ENCODE measurements at regions of chr11 and their contacts with region 1.

Region 1: DNA sequence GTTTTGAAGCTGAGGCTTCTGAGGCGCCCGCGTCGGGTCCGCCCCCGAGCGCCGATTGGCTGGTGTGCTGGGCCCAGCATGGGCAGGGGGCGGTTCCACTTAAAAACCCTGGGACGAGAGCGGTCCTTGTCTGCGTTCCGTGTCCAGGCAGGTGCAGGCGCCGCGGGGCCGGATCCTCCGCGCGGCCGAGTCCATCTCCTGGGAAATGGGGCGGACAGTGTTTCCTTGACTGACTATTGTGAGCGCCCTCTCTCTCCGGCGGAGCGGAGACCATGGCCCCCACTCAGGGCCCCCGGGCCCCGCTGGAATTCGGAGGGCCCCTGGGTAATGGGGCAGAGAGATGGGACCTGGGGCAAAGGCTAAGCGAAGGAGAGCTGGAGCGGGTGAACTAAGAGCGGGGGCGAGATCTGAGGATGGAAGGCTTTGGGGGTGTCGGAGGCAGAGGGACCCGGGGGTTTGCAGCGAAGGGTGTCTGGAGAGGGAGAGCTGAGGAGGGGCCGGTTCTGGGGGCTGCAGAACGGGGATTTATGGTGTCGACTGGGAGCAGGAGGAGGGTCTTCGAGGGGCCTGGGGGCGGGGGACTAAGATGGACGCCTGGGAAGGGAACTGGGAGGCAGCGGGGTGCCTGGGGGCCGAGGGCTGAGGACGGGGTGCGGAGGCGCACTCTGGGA is at the start of gene TM7SF2:
- DNase-seq: peak; percentile 83 to 96 (median 95)
- ATAC-seq: peak; percentile 70
- H3K4me3 ChIP-seq: peak within 1 kb of the TSS; percentile 73 to 84
- H3K4me3 Mint-ChIP-seq: peak within 1 kb of the TSS; percentile 86
- H3K27ac ChIP-seq: peak within 1 kb of the TSS; percentile 67 to 74
- H3K27ac Mint-ChIP-seq: peak within 1 kb of the TSS; percentile 87
- H3K4me1 ChIP-seq: peaks cover 48% of the 10 kb centered on the region
- H3K4me1 Mint-ChIP-seq: peaks cover 38% of the 10 kb centered on the region
- H3K27me3 ChIP-seq: no peaks in the 10 kb centered on the region
- H3K27me3 Mint-ChIP-seq: no peaks in the 10 kb centered on the region
- CTCF ChIP-seq: no peak
- total RNA-seq, gene TM7SF2: 20.7 to 23.8 TPM

Region 2: DNA sequence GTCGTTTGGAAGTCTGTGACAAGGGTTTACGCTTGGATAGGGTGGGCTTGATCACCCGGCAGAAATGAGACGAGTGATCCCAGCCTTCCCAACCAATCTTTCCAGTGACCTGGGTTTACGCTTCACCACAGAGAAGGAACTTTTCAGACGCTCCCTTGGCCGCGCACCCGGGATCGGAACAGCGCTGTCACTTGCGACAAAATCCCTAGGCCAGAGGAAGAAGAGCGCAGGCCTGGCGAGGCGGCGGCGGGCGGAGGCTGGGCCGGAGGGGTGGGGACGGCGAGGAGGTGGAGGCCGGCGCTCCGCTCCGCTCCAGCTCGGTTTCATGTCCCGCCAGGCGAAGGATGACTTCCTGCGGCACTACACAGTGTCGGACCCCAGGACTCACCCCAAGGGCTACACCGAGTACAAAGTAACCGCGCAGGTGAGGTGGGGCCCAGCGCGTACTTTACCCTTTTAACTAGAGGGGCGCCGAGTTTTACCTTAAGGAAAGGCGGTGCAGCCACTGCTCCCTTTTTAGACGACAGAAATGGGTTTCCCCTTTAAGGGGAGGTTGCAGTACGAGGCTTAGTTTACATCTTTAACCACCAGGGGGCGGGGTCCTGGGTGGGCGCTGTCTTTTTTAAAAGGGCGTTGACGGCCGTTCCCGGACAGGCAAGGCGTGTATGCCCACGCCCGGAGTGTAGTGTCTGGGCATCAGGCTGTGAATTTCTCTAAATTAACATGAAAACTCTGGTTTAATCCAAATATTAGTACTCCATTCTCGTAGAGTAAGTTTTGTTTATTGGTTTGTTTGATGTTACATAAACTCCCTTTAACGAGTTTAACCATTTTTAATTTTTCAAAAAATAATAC is 84.4 kb before region 1 on chr11 and contains the start of gene SNX15:
- CTCF ChIA-PET with region 1: interaction called, 5 read pairs
- POLR2A ChIA-PET with region 1: no interaction called
- intact Hi-C with region 1: loop called in 1 of 2 experiments (anchors 1 kb)
- DNase-seq: peak; percentile 77 to 96 (median 90)
- ATAC-seq: peak; percentile 96
- H3K4me3 ChIP-seq: peak within 1 kb of the TSS; percentile 34 to 54
- H3K4me3 Mint-ChIP-seq: peak within 1 kb of the TSS; percentile 69
- H3K27ac ChIP-seq: peak within 1 kb of the TSS; percentile 41 to 71
- H3K27ac Mint-ChIP-seq: peak within 1 kb of the TSS; percentile 80
- H3K4me1 ChIP-seq: peaks cover 19% of the 10 kb centered on the region
- H3K4me1 Mint-ChIP-seq: peaks cover 18% of the 10 kb centered on the region
- H3K27me3 ChIP-seq: no peaks in the 10 kb centered on the region
- H3K27me3 Mint-ChIP-seq: no peaks in the 10 kb centered on the region
- CTCF ChIP-seq: peak; percentile 80
- total RNA-seq, gene SNX15: 10.4 to 14.0 TPM

Region 3: DNA sequence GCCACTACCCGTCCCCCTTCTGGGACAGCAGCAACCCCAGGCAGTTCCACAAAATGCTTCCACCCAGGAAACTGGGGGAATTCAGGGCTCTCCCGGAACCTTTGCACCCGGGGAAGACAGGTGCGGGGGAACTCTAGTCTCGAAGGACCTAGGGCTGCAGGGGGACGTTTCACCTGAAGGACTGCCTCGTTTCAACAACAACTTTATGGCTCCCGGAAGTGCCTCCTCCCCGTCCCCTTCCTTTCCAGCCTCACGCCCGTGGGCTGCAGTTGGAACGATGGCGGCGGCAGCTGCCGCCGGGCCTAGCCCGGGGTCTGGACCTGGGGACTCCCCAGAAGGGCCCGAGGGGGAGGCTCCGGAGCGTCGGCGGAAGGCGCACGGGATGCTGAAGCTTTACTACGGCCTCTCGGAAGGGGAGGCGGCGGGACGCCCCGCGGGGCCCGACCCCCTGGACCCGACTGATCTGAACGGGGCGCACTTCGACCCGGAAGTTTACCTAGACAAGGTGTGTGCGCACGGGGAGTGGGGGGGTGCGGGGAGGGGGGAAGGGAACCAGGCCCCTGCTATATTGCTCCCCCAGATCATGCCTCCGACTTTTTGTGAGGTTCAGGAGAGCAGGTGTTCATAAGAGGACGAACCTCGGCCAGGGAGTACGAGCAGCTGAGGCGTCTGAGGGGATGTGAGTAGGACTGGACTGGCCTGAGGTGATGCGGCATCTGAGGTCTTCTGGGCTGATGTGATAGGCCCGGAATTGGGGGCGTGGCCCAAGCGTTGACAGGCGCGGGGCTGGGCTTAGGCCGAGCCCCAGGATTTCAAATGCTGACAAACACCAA is 15.7 kb before region 1 on chr11 and contains the start of gene VPS51:
- CTCF ChIA-PET with region 1: interaction called, 69 read pairs
- POLR2A ChIA-PET with region 1: interaction called, 41 read pairs
- intact Hi-C with region 1: loop called (anchors 1 kb)
- DNase-seq: peak; percentile 70 to 95 (median 85)
- ATAC-seq: peak; percentile 84
- H3K4me3 ChIP-seq: peak within 1 kb of the TSS; percentile 80 to 81
- H3K4me3 Mint-ChIP-seq: peak within 1 kb of the TSS; percentile 95
- H3K27ac ChIP-seq: peak within 1 kb of the TSS; percentile 82 to 89
- H3K27ac Mint-ChIP-seq: peak within 1 kb of the TSS; percentile 99
- H3K4me1 ChIP-seq: peaks cover 12% of the 10 kb centered on the region
- H3K4me1 Mint-ChIP-seq: peaks cover 24% of the 10 kb centered on the region
- H3K27me3 ChIP-seq: no peaks in the 10 kb centered on the region
- H3K27me3 Mint-ChIP-seq: no peaks in the 10 kb centered on the region
- CTCF ChIP-seq: no peak
- total RNA-seq, gene VPS51: 221 to 263 TPM

Region 4: DNA sequence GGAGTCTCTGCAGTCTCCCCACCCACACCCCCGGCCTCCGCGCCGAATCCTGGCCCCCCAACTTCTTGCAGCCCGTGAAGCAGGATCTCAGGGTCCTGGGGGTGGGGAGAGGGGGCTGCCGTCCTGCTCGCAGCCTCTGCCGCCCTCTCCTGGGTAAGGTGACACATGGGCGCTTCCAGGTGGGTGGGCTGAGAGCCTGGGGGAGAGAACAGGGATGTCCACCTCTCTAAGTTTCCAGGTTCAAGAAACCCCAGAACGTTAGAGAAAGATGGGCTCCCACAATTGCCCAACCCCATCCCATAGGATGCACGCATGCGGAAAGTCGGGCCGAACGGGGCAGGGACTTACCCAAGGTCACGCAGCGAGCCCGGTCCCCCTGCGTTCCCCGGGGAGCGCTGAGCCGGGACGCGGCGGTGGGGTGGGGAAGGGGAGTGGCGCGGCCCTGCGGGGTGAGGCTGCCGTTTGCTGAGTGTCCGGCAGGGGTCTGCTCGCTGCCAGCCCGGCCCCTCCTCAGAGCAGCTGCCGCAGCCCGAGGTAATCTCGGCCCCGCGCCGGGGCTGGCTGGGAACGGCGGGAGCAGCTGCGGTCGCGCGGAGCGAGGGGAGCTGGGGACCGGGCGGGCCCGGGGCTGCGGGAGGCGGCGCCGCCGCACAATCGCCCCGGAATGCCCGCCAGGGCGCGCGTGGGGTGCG is 69.1 kb after region 1 on chr11:
- CTCF ChIA-PET with region 1: interaction called, 10 read pairs
- POLR2A ChIA-PET with region 1: interaction called, 12 read pairs
- intact Hi-C with region 1: loop called (anchors 1 kb)
- DNase-seq: peak; percentile 17 to 73 (median 53)
- ATAC-seq: peak; percentile 68
- H3K4me3 ChIP-seq: peak overlapping the region; percentile 85 to 95
- H3K4me3 Mint-ChIP-seq: peak overlapping the region; percentile 91
- H3K27ac ChIP-seq: peak overlapping the region in 1 of 2 experiments; percentile 23
- H3K27ac Mint-ChIP-seq: peak overlapping the region; percentile 80
- H3K4me1 ChIP-seq: peaks cover 24% of the 10 kb centered on the region
- H3K4me1 Mint-ChIP-seq: peaks cover 28% of the 10 kb centered on the region
- H3K27me3 ChIP-seq: no peaks in the 10 kb centered on the region
- H3K27me3 Mint-ChIP-seq: no peaks in the 10 kb centered on the region
- CTCF ChIP-seq: peak; percentile 57